ENCODE measurements at regions of chr9 and their contacts with region 1.

Region 1: DNA sequence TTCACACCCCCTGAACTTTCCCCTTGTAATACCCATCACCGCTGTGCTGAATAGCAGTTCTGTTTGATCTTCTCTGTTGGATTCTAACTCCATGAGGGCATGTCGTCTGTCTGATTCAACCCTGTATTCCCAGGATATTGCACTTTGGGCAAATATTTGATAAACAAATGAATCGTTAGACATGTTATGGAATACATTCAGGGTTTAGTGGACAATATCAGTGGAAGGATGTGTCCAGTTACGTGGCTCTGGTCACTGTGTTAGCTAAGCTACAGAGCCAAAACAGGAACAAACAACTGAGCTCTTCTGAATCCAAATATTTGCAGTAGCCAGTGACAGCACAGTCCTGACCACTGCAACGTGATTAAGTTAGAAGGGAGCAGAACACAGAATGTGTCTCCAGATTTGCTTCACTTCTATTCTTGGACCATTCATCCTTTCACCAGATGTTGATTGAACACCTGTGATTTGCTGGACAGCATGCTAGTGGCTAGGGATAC is 13.2 kb downstream of the ANGPTL2 start:
- DNase-seq: no peak
- H3K4me3 Mint-ChIP-seq: no peak overlapping the region
- H3K27ac Mint-ChIP-seq: no peak overlapping the region
- H3K4me1 Mint-ChIP-seq: no peaks in the 10 kb centered on the region
- H3K27me3 Mint-ChIP-seq: peaks cover 10% of the 10 kb centered on the region
- CTCF ChIP-seq: no peak

Region 2: GRCh38 chr9:127049044-127049443 is 60.2 kb before region 1 on chr9:
- CTCF ChIA-PET with region 1: no interaction called
- intact Hi-C with region 1: no loop called
- DNase-seq: peak; percentile 33
- H3K4me3 Mint-ChIP-seq: no peak overlapping the region
- H3K27ac Mint-ChIP-seq: peak overlapping the region; percentile 15
- H3K4me1 Mint-ChIP-seq: peaks cover 15% of the 10 kb centered on the region
- H3K27me3 Mint-ChIP-seq: no peaks in the 10 kb centered on the region
- CTCF ChIP-seq: no peak

Region 3: DNA sequence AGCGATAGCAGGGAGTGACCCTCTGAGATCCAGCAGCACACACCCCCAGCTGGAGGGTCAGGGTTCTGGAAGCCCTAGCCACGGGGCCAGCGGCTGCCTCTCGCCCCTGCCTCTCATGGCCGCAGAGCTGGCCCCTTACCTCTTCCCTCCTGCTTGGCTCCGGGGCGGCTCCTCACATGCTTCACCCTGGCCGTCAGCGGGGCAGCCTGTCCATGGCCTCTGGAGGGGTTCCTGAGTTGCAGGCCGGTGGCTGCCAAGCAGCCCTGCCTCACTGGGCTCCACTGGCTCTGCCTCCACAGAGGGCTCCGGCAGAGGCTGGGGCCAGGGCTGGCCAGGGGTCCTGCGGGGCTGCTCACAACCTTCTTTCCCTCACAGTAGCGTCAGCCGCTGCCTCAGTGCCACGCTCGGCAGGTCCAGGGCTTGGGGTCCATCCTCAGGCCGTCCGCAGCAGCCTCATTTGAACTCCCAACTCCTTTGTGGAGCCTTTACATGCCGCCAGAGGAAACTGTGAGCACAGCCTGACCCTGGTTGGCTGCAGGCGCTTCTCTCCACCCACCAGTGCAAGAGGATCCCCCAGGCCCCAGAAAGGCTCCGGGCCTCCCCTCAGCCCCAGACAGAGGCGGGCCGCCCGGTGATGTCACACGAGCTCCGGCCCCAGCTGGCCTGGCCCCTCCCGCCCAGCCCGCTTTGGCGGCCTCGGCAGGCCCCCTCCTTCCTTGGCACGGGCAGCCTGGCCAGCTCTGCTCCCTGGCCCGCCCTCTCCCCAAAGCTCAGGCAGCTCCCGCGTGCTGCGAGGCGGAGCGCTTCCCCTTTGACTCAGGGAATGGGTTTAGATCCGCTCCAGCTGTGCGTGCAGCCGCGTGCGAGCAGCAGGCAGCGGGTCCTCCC is 13.2 kb after region 1 on chr9 and contains the start of gene ANGPTL2:
- CTCF ChIA-PET with region 1: interaction called, 10 read pairs
- intact Hi-C with region 1: no loop called
- DNase-seq: no peak
- H3K4me3 Mint-ChIP-seq: no peak within 1 kb of the TSS
- H3K27ac Mint-ChIP-seq: no peak within 1 kb of the TSS
- H3K4me1 Mint-ChIP-seq: no peaks in the 10 kb centered on the region
- H3K27me3 Mint-ChIP-seq: peaks cover 36% of the 10 kb centered on the region
- CTCF ChIP-seq: no peak
- total RNA-seq, gene ANGPTL2: not detected in 2 replicates

Region 4: GRCh38 chr9:127133739-127134167 is 24.5 kb after region 1 on chr9:
- CTCF ChIA-PET with region 1: no interaction called
- intact Hi-C with region 1: no loop called
- DNase-seq: no peak
- H3K4me3 Mint-ChIP-seq: no peak overlapping the region
- H3K27ac Mint-ChIP-seq: no peak overlapping the region
- H3K4me1 Mint-ChIP-seq: no peaks in the 10 kb centered on the region
- H3K27me3 Mint-ChIP-seq: no peaks in the 10 kb centered on the region
- CTCF ChIP-seq: no peak